ENCODE measurements at regions of chr11 and their contacts with region 1.

Region 1: DNA sequence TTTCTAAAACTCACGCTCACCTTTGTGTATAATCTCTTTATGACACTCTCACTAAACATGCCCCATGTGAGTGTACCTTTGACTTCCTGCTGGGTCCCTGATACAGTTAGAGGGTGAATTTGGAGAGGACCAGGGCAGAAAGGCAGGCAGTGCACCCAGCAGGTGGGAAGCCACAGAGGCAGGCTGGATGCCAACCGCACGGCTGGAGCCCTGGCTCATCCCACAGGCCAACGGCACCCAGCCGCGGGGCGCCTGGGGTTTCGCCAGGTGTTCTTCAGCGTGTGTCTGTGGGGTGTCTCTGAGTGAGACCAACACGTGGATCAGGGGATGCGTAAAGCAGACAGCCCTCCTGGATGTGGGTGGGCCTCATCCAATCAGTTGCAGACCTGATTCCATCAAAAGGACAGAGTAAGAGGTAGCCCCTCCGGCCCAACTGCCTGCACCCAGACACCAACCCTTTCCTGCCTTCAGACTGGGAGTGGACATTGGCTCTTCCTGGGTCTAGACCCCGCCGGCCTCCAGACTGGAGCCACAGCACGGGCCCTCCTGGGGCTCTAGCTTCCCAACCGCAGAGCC is 51.6 kb downstream of the DHCR7 start:
- H3K4me3 ChIP-seq: no peak overlapping the region
- H3K27ac ChIP-seq: no peak overlapping the region
- H3K4me1 ChIP-seq: no peaks in the 10 kb centered on the region
- CTCF ChIP-seq: no peak

Region 2: DNA sequence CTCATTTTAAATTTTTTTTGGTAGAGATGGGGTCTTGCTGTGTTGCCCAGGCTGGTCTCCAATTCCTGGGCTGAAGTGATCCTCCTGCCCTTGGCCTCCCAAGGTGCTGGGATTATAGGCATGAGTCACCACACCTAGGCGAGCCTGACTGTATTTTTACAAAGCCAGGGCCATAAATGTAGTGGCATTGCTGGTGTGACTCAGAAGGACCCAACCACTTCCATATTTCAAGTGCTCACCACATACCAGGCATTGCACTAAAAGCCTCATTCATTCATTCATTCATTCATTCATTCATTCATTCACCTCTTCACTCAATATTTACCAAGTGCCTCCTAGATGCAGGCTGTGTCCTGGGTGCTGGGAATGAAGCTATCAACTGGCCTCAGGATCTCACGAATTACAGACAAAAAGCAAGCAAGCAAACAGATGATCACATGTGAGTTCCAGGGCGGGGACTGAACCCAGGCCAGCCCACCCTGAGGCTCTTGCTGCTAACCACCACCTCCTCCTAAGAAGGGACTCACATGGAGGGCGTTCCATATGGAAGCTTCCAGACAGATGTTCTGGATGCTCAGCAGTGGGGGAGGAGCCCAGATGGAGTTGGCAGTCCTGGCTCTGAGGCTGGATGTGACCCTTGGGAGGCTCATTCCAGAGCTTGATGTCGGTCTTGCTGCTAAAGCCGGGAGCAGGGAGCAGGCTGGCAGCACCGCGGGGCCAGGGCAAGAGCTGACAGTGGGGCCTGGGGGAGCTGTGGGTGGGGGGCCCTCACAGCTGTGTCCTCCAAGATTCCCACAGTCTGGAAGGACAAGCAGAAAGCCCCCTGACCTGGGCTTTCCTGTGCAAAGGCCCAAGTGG is 839.5 kb before region 1 on chr11:
- CTCF ChIA-PET with region 1: no interaction called
- POLR2A ChIA-PET with region 1: interaction called, 10 read pairs
- H3K4me3 ChIP-seq: no peak overlapping the region
- H3K27ac ChIP-seq: no peak overlapping the region
- H3K4me1 ChIP-seq: no peaks in the 10 kb centered on the region
- CTCF ChIP-seq: no peak

Region 3: GRCh38 chr11:71383461-71383860 is 13.2 kb before region 1 on chr11:
- CTCF ChIA-PET with region 1: no interaction called
- POLR2A ChIA-PET with region 1: no interaction called
- H3K4me3 ChIP-seq: no peak overlapping the region
- H3K27ac ChIP-seq: no peak overlapping the region
- H3K4me1 ChIP-seq: no peaks in the 10 kb centered on the region
- CTCF ChIP-seq: no peak

Measured in HEK293 (cell line).